HepG2 (cell line): ENCODE measurements at regions of chr16 and their contacts with region 1.

Region 1: DNA sequence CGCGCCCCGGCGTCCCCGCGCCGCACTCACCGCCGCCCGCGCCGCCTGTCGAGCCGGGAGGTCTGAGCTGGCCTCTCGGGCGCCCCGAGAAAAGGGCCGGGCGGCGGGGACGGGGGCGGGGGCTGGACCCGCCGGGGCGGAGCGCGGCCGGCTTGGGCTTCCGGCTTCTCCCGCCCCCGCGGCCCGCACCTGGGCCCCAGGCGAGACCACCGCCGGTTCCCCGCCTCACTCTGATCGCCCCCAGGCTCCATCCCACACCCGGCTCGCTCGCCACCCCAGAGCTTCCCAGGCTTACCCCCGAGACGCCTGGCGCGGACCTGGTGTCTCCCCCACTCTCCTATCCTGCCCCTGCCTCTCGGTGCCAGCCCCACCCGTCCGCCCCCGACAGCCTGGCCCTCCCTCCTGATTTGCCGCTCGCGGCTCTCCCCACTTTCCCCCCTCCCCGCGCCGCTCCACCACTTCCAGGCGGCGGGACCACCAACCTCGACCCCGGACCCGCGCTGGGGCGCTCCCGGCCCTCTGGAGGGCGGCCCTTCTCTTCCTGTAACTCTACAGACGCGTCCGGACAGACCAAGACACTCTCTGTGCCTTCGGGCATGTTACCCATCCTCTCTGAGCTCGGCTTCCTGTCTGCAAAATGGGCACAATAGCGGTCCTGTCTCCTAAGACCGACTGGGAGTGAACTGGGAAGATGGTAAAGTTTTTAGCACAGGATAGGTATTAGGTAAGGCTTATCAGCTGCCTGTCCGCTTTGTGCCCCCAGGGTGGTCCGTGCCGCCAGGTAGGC is at the start of gene LITAF:
- DNase-seq: no peak
- ATAC-seq: peak; percentile 80
- H3K4me3 ChIP-seq: peak within 1 kb of the TSS; percentile 73 to 96 (median 96)
- H3K27ac ChIP-seq: peak within 1 kb of the TSS; percentile 57
- H3K4me1 ChIP-seq: peaks cover 47% of the 10 kb centered on the region
- H3K27me3 ChIP-seq: peaks cover 0 to 21% of the 10 kb centered on the region in 2 experiments; a peak in 2 of 5 replicates
- CTCF ChIP-seq: peak; percentile 58
- EP300 ChIP-seq: no peak; a peak in 1 of 4 replicates
- POLR2A ChIP-seq: peak; percentile 42 to 83; a peak in 3 of 4 replicates
- RAD21 ChIP-seq: no peak
- total RNA-seq, gene LITAF: 141 and 186 TPM in 2 replicates

Region 2: GRCh38 chr16:11576427-11577289 is 10.4 kb before region 1 on chr16:
- CTCF ChIA-PET with region 1: no interaction called
- POLR2A ChIA-PET with region 1: interaction called, 54 read pairs
- in situ Hi-C with region 1: no loop called
- intact Hi-C with region 1: loop called (anchors 1 kb)
- DNase-seq: peak; percentile 97
- ATAC-seq: peak; percentile 76
- H3K4me3 ChIP-seq: peak overlapping the region in 1 of 3 experiments; percentile 51; a peak in 2 of 6 replicates
- H3K27ac ChIP-seq: peak overlapping the region; percentile 86
- H3K4me1 ChIP-seq: peaks cover 90% of the 10 kb centered on the region
- H3K27me3 ChIP-seq: no peaks in the 10 kb centered on the region
- CTCF ChIP-seq: 0 out of 2 replicates have a peak, but pooled peaks have one; percentile 1
- EP300 ChIP-seq: peak; percentile 25 to 92; a peak in 2 of 4 replicates
- POLR2A ChIP-seq: peak in 1 of 2 experiments; percentile 21; a peak in 1 of 4 replicates
- RAD21 ChIP-seq: no peak

Region 3: GRCh38 chr16:11597239-11598101 is 10.4 kb after region 1 on chr16:
- CTCF ChIA-PET with region 1: no interaction called
- POLR2A ChIA-PET with region 1: interaction called, 14 read pairs
- in situ Hi-C with region 1: no loop called
- intact Hi-C with region 1: no loop called
- DNase-seq: no peak
- ATAC-seq: peak; percentile 84
- H3K4me3 ChIP-seq: peak overlapping the region; percentile 17 to 67 (median 29); a peak in 5 of 6 replicates
- H3K27ac ChIP-seq: no peak overlapping the region
- H3K4me1 ChIP-seq: peaks cover 65% of the 10 kb centered on the region
- H3K27me3 ChIP-seq: peaks cover 9 to 58% of the 10 kb centered on the region in 2 experiments
- CTCF ChIP-seq: peak; percentile 53
- EP300 ChIP-seq: no peak
- POLR2A ChIP-seq: no peak
- RAD21 ChIP-seq: no peak

Region 4: DNA sequence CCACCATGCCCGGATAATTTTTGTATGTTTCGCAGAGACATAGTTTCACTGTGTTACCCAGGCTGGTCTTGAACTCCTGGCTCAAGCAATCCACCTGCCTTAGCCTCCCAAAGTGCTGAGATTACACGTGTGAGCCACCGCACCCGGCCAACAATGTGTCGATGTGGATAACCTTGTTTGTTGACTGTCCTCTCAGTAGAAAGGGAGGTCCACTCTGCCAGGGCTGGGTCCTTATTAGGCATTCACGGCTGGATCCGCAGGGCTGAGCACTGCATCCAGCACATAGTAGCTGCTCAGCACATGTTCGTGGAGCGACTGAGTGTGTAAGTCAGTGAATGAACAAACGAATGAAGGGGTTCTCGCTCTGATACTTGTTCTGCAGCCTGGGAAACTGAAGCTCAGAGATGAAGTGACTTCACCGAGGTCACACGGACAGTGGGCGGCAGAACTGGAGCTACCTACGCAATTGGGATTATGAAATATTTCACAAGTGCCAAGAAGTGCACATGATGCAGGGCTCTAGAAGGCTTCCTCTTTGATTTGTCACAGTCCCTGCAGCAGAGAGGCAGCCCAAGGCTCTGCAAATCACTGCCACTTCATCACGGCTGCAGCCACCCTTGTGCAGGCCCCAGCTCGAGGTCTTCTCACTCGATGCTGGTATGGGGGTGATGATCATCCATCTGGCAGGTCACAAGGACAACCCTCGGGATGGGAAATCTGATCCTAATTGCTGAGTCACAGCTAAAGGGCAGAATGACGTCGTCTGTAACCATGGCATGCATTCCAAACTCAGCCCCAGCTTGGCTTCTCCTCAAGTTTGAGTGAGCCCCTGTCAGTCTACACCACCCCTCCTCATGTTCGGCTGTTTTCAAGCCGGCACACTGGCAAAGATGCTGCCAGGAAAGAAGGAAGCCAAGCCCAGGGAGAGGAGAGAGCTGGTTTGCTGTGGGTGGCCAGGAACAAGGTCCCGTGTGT is 53.2 kb after region 1 on chr16:
- CTCF ChIA-PET with region 1: no interaction called
- POLR2A ChIA-PET with region 1: interaction called, 6 read pairs
- in situ Hi-C with region 1: no loop called
- intact Hi-C with region 1: loop called (anchors 2 kb)
- DNase-seq: peak; percentile 90
- ATAC-seq: peak; percentile 75
- H3K4me3 ChIP-seq: peak overlapping the region in 1 of 3 experiments; percentile 63; a peak in 2 of 6 replicates
- H3K27ac ChIP-seq: peak overlapping the region; percentile 0
- H3K4me1 ChIP-seq: peaks cover 34% of the 10 kb centered on the region
- H3K27me3 ChIP-seq: peaks cover 0 to 11% of the 10 kb centered on the region in 2 experiments; a peak in 2 of 5 replicates
- CTCF ChIP-seq: no peak; the same call in none of the 2 replicates
- EP300 ChIP-seq: peak in 1 of 2 experiments; percentile 90; a peak in 2 of 4 replicates
- POLR2A ChIP-seq: peak in 1 of 2 experiments; percentile 63; a peak in 1 of 4 replicates
- RAD21 ChIP-seq: no peak